MCF 10A (cell line): ENCODE measurements at regions of chr12 and their contacts with region 1.

Region 1: DNA sequence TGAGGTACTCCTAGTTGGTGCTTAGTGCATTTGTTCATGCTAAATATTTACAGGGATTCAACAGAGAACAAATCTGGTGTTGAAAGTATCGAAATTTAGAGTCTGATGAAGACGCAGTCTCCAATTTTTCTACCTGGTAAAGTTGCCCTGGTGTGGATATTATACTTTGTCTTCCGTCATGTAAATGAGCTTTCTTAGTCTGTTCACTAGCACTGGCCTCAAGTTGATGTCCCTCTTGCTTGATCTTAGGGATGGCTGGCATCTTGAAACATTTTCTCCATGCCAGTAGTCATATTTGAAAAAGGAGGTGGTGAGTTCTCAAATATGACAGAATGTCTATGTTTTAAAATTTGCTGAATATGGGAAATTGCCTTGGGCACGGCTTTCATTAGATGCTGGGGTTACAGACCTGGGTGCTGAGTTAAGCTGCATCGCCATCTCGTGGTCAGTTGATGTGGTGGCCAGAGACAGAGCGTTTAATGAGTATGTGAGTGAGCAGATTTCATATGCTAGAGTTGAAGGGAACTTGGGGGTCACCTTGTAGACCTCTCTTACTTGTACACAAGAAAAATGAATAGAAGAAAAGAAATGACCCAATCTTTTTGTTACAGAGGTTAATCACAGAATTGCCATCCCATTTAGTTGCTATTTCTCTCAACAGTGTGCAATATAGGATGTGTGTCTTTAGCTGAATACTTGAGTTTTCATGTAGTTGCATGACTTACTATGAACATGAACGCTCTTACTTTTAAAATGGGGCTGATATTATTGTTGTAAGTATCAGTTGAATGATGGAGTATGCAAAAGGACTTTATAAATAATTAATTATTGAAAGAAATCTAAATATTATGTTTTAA is 172.8 kb upstream of the DCN start:
- DNase-seq: peak; percentile 81
- H3K4me3 Mint-ChIP-seq: no peak overlapping the region
- H3K27ac Mint-ChIP-seq: no peak overlapping the region
- H3K4me1 Mint-ChIP-seq: peaks cover 4% of the 10 kb centered on the region
- H3K27me3 Mint-ChIP-seq: peaks cover 32% of the 10 kb centered on the region
- CTCF ChIP-seq: peak; percentile 80

Region 2: GRCh38 chr12:90940872-90941499 is 414.4 kb before region 1 on chr12:
- CTCF ChIA-PET with region 1: interaction called, 6 read pairs
- POLR2A ChIA-PET with region 1: no interaction called
- intact Hi-C with region 1: loop called (anchors 1 kb)
- DNase-seq: peak; percentile 68
- H3K4me3 Mint-ChIP-seq: no peak overlapping the region
- H3K27ac Mint-ChIP-seq: no peak overlapping the region
- H3K4me1 Mint-ChIP-seq: peaks cover 6% of the 10 kb centered on the region
- H3K27me3 Mint-ChIP-seq: no peaks in the 10 kb centered on the region
- CTCF ChIP-seq: peak; percentile 68

Region 3: GRCh38 chr12:90987520-90987919 is 367.9 kb before region 1 on chr12:
- CTCF ChIA-PET with region 1: interaction called, 12 read pairs
- POLR2A ChIA-PET with region 1: no interaction called
- intact Hi-C with region 1: no loop called
- DNase-seq: no peak
- H3K4me3 Mint-ChIP-seq: no peak overlapping the region
- H3K27ac Mint-ChIP-seq: no peak overlapping the region
- H3K4me1 Mint-ChIP-seq: no peaks in the 10 kb centered on the region
- H3K27me3 Mint-ChIP-seq: peaks cover 43% of the 10 kb centered on the region
- CTCF ChIP-seq: peak; percentile 14

Region 4: DNA sequence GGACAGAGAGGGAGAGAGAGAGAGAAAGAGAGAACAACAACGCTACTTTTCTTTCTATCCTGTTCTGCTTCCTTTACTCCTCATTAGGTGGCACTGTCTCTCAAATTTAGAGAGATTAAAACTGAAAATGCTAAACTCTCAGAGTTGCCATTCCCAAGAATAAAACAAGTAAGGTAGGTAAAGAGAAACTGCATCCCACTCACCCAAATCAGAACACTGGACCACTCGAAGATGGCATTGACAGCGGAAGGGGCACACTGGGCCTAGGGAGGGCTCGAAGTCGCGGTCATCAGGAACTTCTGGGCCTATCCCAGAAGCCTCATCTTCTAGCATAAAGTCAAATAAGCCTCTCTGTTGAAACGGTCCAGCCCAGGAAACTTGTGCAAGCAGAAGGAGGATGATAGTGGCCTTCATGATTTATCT is 177.2 kb before region 1 on chr12:
- CTCF ChIA-PET with region 1: interaction called, 18 read pairs
- POLR2A ChIA-PET with region 1: interaction called, 5 read pairs
- intact Hi-C with region 1: loop called (anchors 1 kb)
- DNase-seq: peak; percentile 44
- H3K4me3 Mint-ChIP-seq: no peak overlapping the region
- H3K27ac Mint-ChIP-seq: no peak overlapping the region
- H3K4me1 Mint-ChIP-seq: no peaks in the 10 kb centered on the region
- H3K27me3 Mint-ChIP-seq: peaks cover 41% of the 10 kb centered on the region
- CTCF ChIP-seq: peak; percentile 44

Region 5: DNA sequence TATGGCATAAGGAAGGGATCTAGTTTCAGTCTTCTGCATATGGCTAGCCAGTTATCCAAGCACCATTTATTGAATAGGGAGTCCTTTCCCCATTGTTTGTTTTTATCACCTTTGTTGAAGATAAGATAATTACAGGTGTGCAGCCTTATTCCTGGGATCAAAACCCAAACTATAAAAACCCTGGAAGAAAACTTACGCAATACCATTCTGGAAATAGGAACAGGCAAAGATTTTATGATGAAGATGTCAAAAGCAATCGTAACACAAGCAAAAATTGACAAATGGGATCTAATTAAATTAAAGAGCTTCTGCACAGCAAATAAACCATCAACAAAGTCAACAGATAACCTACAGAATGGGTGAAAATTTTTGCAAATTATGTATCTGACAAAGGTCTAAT is 44.3 kb before region 1 on chr12:
- CTCF ChIA-PET with region 1: no interaction called
- POLR2A ChIA-PET with region 1: no interaction called
- intact Hi-C with region 1: no loop called
- DNase-seq: no peak
- H3K4me3 Mint-ChIP-seq: no peak overlapping the region
- H3K27ac Mint-ChIP-seq: no peak overlapping the region
- H3K4me1 Mint-ChIP-seq: no peaks in the 10 kb centered on the region
- H3K27me3 Mint-ChIP-seq: peaks cover 77% of the 10 kb centered on the region
- CTCF ChIP-seq: no peak

Region 6: DNA sequence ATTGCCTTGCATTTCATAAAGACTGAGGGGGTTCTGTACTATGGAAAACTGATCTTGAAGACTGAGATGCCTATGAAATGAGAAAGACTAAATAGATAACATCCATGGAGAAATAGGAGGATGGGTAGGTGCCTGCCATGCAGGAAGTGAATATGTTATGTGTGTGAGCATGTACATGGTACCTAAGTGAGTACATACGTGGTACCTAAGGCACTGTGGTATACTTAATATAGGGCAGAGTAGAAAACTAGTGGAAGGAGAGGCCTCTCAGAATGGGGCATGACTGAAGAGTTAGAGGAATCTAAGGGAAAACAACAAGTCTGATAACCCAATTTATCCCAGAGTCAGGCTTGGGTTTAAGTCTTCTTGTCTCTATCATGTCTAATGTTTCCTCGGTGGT is 11.0 kb before region 1 on chr12:
- CTCF ChIA-PET with region 1: interaction called, 10 read pairs
- POLR2A ChIA-PET with region 1: interaction called, 3 read pairs
- intact Hi-C with region 1: no loop called
- DNase-seq: no peak
- H3K4me3 Mint-ChIP-seq: no peak overlapping the region
- H3K27ac Mint-ChIP-seq: no peak overlapping the region
- H3K4me1 Mint-ChIP-seq: peaks cover under 1% of the 10 kb centered on the region
- H3K27me3 Mint-ChIP-seq: peaks cover 81% of the 10 kb centered on the region
- CTCF ChIP-seq: no peak

Region 7: GRCh38 chr12:91422801-91423688 is 67.7 kb after region 1 on chr12:
- CTCF ChIA-PET with region 1: no interaction called
- POLR2A ChIA-PET with region 1: no interaction called
- intact Hi-C with region 1: no loop called
- DNase-seq: no peak
- H3K4me3 Mint-ChIP-seq: peak overlapping the region; percentile 9
- H3K27ac Mint-ChIP-seq: no peak overlapping the region
- H3K4me1 Mint-ChIP-seq: peaks cover 8% of the 10 kb centered on the region
- H3K27me3 Mint-ChIP-seq: no peaks in the 10 kb centered on the region
- CTCF ChIP-seq: no peak